HEK293T (cell line): ENCODE measurements at regions of chr10 and their contacts with region 1.

Region 1: DNA sequence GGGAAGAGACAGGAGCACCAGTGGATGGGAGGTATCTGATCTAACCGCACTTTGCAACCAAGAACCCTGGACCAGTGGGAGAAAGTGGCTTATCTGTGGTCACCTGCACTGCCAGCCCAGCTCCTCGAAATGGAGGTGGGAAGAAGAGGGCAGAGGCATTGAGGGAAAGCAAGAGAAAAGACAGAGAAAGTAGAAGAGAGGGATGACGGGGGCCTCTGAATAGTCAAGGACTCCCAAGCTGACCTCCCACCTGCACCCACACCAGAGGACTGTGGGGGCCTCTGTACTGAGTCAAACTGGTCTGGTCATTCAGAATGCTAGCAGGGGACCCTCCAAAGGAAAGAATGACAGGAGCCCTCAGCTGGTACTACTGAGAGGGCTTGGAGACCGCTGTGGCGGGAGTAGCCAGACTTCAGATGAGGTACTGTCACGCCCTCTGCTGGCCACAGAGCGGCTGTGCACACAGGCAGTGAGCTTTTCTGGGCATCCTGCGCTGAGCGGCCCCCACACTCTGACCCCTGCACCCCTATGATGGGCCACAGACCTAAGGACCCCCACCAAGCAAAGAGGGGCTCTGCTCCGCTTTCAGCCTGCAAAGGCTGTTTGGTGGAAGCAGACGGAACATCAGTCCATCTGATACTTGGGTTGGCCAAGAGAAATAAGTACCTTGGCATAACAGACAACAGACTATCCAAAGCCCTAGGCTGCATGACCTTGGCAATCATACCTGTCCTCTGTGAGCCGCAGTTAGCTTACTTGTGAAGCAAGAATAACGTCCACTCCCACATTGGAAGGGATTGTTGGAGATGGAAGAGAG is 112.9 kb downstream of the COL13A1 start:
- DNase-seq: peak; percentile 85

Region 2: GRCh38 chr10:69703766-69704638 is 210.6 kb before region 1 on chr10:
- CTCF ChIA-PET with region 1: no interaction called
- POLR2A ChIA-PET with region 1: no interaction called
- DNase-seq: no peak

Region 3: GRCh38 chr10:69742928-69743602 is 171.5 kb before region 1 on chr10:
- CTCF ChIA-PET with region 1: interaction called, 12 read pairs
- POLR2A ChIA-PET with region 1: no interaction called
- DNase-seq: peak; percentile 73

Region 4: GRCh38 chr10:69786791-69787190 is 127.8 kb before region 1 on chr10:
- CTCF ChIA-PET with region 1: interaction called, 30 read pairs
- POLR2A ChIA-PET with region 1: no interaction called
- DNase-seq: peak; percentile 27

Region 5: DNA sequence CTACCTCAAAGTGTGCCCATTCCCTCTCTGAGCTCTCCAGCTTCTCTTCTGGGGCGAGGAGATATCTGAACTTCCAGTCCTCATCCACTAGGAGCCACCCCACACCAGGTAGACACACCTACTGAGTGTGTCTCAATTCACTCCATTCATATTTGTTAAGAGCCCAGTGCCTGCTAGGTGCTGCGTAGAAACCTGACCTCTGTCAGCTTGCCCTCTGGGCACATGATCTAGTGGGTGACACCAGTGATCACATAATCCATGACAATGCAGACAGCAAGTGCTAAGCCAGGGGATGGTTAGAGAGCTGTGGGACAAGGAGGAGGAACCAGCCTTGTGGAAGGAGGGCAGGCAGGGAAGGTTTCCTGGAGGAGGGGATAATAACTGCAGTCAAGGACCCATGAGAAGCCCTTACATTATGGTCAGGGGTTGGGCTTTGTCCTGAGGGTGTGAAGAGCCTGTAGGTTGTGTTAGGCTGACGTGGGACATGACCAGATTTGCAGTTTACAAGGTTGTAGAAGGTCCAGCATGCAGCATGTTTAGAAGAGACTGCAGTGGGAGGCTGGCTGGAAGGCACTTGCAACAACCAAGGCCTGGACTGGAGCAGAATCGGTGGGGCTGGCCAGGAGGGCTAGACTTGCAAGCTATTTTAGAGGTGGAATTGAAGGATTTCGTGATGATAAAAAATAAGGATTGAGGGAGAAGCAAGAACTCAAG is 31.1 kb before region 1 on chr10:
- CTCF ChIA-PET with region 1: interaction called, 10 read pairs
- POLR2A ChIA-PET with region 1: no interaction called
- DNase-seq: peak; percentile 23

Region 6: GRCh38 chr10:69901628-69902505 is 12.7 kb before region 1 on chr10:
- CTCF ChIA-PET with region 1: interaction called, 10 read pairs
- POLR2A ChIA-PET with region 1: no interaction called
- DNase-seq: peak; percentile 83